PC-3 (cell line): ENCODE measurements at regions of chr2 and their contacts with region 1.

Region 1: GRCh38 chr2:72713857-72714256 is 112.0 kb downstream of the EXOC6B start:
- DNase-seq: peak; percentile 26
- ATAC-seq: no peak
- H3K4me3 ChIP-seq: no peak overlapping the region
- H3K27ac ChIP-seq: no peak overlapping the region
- H3K4me1 ChIP-seq: peaks cover 5% of the 10 kb centered on the region
- H3K27me3 ChIP-seq: no peaks in the 10 kb centered on the region
- CTCF ChIP-seq: peak; percentile 41; the same call in 1 of the 2 replicates

Region 2: GRCh38 chr2:72605836-72606442 is 107.9 kb before region 1 on chr2:
- CTCF ChIA-PET with region 1: no interaction called
- POLR2A ChIA-PET with region 1: no interaction called
- intact Hi-C with region 1: loop called (anchors 5 kb)
- DNase-seq: peak; percentile 52
- ATAC-seq: no peak
- H3K4me3 ChIP-seq: no peak overlapping the region
- H3K27ac ChIP-seq: no peak overlapping the region
- H3K4me1 ChIP-seq: peaks cover 6% of the 10 kb centered on the region; the same call in 1 of the 2 replicates
- H3K27me3 ChIP-seq: no peaks in the 10 kb centered on the region
- CTCF ChIP-seq: peak; percentile 86

Region 3: GRCh38 chr2:72682061-72682460 is 31.8 kb before region 1 on chr2:
- CTCF ChIA-PET with region 1: no interaction called
- POLR2A ChIA-PET with region 1: no interaction called
- intact Hi-C with region 1: loop called (anchors 2 kb)
- DNase-seq: no peak
- ATAC-seq: no peak
- H3K4me3 ChIP-seq: no peak overlapping the region
- H3K27ac ChIP-seq: no peak overlapping the region
- H3K4me1 ChIP-seq: no peaks in the 10 kb centered on the region
- H3K27me3 ChIP-seq: no peaks in the 10 kb centered on the region
- CTCF ChIP-seq: no peak